ENCODE measurements at regions of chr9 and their contacts with region 1.

Region 1: DNA sequence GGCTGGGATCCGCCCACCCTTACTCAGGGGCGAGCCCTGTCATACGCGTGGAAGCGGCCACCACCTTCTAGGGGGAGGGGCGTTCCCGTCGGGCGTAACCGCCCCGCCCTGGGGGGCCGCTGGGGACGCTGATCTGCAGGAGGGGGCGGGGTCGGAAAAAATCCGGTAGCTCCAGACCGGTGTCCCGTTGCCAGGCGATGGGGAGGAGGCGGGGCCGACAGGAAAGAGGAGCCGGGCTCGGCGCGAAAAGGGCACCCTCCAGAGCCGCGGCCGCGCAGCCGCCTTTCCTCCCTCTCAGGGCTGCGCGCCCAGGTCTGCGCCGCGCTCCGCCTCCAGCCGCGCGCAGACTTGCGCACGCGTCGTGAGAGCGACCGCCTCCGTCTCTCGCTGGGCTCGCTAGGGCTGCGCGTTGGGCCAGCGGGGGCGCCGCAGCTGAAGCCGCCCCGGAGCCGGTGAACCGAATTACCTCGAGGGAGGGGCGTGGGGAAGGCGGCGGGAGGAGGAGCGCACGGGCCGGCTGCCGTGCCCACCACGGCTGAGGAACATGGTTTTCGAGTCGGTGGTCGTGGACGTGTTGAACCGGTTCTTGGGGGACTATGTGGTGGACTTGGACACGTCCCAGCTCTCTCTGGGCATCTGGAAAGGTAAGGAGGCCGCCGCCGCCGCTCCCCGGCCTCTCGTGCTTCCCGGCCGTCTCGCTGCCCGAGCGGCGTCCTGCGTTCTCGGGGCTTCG is at the start of gene VPS13A:
- DNase-seq: peak; percentile 94
- ATAC-seq: peak; percentile 84
- H3K4me3 ChIP-seq: peak within 1 kb of the TSS; percentile 60 to 88 (median 78)
- H3K4me3 Mint-ChIP-seq: peak within 1 kb of the TSS; percentile 94
- H3K27ac ChIP-seq: peak within 1 kb of the TSS; percentile 78 to 92
- H3K27ac Mint-ChIP-seq: peak within 1 kb of the TSS; percentile 96
- H3K4me1 ChIP-seq: peaks cover 6 to 18% of the 10 kb centered on the region in 2 donors
- H3K4me1 Mint-ChIP-seq: peaks cover 28% of the 10 kb centered on the region
- H3K27me3 ChIP-seq: no peaks in the 10 kb centered on the region
- H3K27me3 Mint-ChIP-seq: no peaks in the 10 kb centered on the region
- CTCF ChIP-seq: peak; percentile 27
- total RNA-seq, gene VPS13A: 57.8 and 67.9 TPM in 2 replicates

Region 2: GRCh38 chr9:76393963-76394679 is 783.2 kb before region 1 on chr9 and contains the start of gene RFK:
- CTCF ChIA-PET with region 1: no interaction called
- POLR2A ChIA-PET with region 1: no interaction called
- intact Hi-C with region 1: loop called (anchors 1 kb)
- DNase-seq: peak; percentile 95
- ATAC-seq: peak; percentile 92
- H3K4me3 ChIP-seq: peak within 1 kb of the TSS; percentile 93 to 98 (median 97)
- H3K4me3 Mint-ChIP-seq: peak within 1 kb of the TSS; percentile 94
- H3K27ac ChIP-seq: peak within 1 kb of the TSS; percentile 78 to 98
- H3K27ac Mint-ChIP-seq: peak within 1 kb of the TSS; percentile 98
- H3K4me1 ChIP-seq: peaks cover 9 to 15% of the 10 kb centered on the region in 2 donors
- H3K4me1 Mint-ChIP-seq: peaks cover 15% of the 10 kb centered on the region
- H3K27me3 ChIP-seq: no peaks in the 10 kb centered on the region
- H3K27me3 Mint-ChIP-seq: no peaks in the 10 kb centered on the region
- CTCF ChIP-seq: peak; percentile 61
- total RNA-seq, gene RFK: 7.3 and 9.0 TPM in 2 replicates

Region 3: GRCh38 chr9:76756268-76756640 is 421.1 kb before region 1 on chr9:
- CTCF ChIA-PET with region 1: no interaction called
- POLR2A ChIA-PET with region 1: no interaction called
- intact Hi-C with region 1: loop called (anchors 5 kb)
- DNase-seq: peak; percentile 37
- ATAC-seq: no peak
- H3K4me3 ChIP-seq: peak overlapping the region in 1 of 5 experiments; percentile 28
- H3K4me3 Mint-ChIP-seq: peak overlapping the region; percentile 84
- H3K27ac ChIP-seq: peak overlapping the region; percentile 62 to 68
- H3K27ac Mint-ChIP-seq: peak overlapping the region; percentile 78
- H3K4me1 ChIP-seq: peaks cover 43 to 55% of the 10 kb centered on the region in 2 donors
- H3K4me1 Mint-ChIP-seq: peaks cover 62% of the 10 kb centered on the region
- H3K27me3 ChIP-seq: no peaks in the 10 kb centered on the region
- H3K27me3 Mint-ChIP-seq: peaks cover 4% of the 10 kb centered on the region
- CTCF ChIP-seq: no peak

Region 4: DNA sequence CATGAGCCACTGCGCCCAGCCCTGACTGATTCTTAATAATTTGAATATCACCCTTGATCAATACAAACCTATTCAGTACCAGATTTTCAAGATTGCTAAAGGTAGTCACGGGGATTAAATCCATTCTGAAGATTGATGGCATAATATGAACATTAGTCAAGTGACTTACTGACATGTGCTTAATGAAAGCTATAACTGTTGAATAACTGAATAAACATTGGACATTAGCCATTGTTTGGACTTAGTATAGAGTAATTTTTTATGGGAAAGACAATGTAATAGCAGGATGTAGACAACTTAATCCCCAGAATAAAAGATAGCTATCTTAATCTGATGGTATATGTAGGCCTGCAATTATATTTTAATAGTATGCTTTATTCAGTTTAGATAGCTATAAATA is 35.0 kb before region 1 on chr9:
- CTCF ChIA-PET with region 1: no interaction called
- POLR2A ChIA-PET with region 1: no interaction called
- intact Hi-C with region 1: no loop called
- DNase-seq: no peak
- ATAC-seq: no peak
- H3K4me3 ChIP-seq: no peak overlapping the region
- H3K4me3 Mint-ChIP-seq: no peak overlapping the region
- H3K27ac ChIP-seq: no peak overlapping the region
- H3K27ac Mint-ChIP-seq: no peak overlapping the region
- H3K4me1 ChIP-seq: no peaks in the 10 kb centered on the region
- H3K4me1 Mint-ChIP-seq: no peaks in the 10 kb centered on the region
- H3K27me3 ChIP-seq: peaks cover 0 to 4% (median 0%) of the 10 kb centered on the region in 4 experiments
- H3K27me3 Mint-ChIP-seq: peaks cover 13% of the 10 kb centered on the region
- CTCF ChIP-seq: no peak

Region 5: DNA sequence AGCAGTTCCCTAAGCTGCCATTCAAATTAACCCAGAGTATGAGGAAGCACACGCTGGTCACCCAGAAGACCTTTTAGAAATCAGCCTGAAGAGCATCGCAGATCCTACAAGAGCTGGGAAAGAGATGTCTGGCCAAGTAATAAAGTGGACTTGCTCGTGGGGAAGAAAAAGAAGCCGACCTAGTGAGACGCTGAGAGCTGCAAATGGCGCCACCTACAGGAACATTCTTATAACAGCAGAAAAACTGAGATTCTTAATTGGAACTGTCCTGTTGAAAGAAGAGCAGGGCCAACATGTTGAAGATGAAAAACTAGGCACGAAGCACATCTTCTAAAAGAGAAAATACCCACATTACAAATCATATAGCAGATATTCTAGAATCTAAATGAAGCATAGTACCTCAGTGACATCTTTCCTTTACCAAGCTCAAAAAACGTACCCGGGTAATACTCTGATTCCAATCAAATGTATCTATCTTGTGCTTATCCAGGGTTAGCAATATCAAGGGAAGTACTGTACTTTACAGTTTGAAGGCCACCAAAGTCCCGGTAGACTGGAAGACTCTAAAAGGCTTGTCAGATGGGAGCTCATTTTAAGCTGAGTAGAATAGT is 858.2 kb after region 1 on chr9:
- CTCF ChIA-PET with region 1: no interaction called
- POLR2A ChIA-PET with region 1: no interaction called
- intact Hi-C with region 1: loop called (anchors 5 kb)
- DNase-seq: peak; percentile 68
- ATAC-seq: no peak
- H3K4me3 ChIP-seq: no peak overlapping the region
- H3K4me3 Mint-ChIP-seq: no peak overlapping the region
- H3K27ac ChIP-seq: no peak overlapping the region
- H3K27ac Mint-ChIP-seq: no peak overlapping the region
- H3K4me1 ChIP-seq: peaks cover 18 to 19% of the 10 kb centered on the region in 2 donors
- H3K4me1 Mint-ChIP-seq: peaks cover 13% of the 10 kb centered on the region
- H3K27me3 ChIP-seq: peaks cover 0 to 42% (median 34%) of the 10 kb centered on the region in 4 experiments
- H3K27me3 Mint-ChIP-seq: peaks cover 55% of the 10 kb centered on the region
- CTCF ChIP-seq: peak; percentile 71

Region 6: DNA sequence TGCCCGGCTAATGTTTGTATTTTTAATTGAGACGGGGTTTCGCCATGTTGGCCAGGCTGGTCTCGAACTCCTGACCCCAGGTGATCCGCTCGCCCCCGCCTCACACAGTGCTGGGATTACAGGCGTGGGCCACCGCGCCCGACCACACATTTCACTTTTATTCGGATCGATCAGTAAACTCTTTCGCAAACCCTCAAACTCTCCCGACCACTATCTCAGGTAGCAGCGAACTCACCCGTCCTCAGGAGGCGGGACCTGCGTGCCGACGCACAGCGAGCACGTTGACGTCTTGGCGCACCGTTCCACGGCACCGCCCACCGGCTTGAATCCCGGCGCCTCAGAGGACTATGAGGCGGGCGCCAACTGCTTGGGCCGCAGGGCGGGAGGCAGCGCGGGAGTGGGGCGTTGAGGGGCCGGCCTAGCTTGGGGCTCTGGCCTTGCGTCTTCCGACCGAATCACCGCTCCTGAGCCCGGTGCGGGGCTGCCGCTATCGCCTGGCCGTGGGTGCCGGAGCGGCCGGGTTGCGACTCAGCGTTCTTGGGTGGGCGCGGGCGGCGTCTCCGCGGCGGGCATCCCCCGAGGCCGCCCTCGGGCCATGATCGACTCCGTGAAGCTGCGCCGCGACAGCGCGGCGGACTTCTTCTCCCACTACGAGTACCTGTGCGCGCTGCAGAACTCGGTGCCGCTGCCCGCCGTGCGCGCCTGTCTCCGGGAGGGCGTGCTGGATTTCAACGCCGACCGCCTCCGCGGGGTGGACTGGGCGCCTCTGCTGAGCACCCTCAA is 1058.6 kb after region 1 on chr9 and contains the start of gene CEP78:
- CTCF ChIA-PET with region 1: no interaction called
- POLR2A ChIA-PET with region 1: no interaction called
- intact Hi-C with region 1: loop called (anchors 2 kb)
- DNase-seq: peak; percentile 91
- ATAC-seq: peak; percentile 99
- H3K4me3 ChIP-seq: peak within 1 kb of the TSS; percentile 50 to 90 (median 84)
- H3K4me3 Mint-ChIP-seq: no peak within 1 kb of the TSS
- H3K27ac ChIP-seq: peak within 1 kb of the TSS; percentile 58 to 84
- H3K27ac Mint-ChIP-seq: peak within 1 kb of the TSS; percentile 93
- H3K4me1 ChIP-seq: peaks cover 13 to 17% of the 10 kb centered on the region in 2 donors
- H3K4me1 Mint-ChIP-seq: peaks cover 26% of the 10 kb centered on the region
- H3K27me3 ChIP-seq: no peaks in the 10 kb centered on the region
- H3K27me3 Mint-ChIP-seq: no peaks in the 10 kb centered on the region
- CTCF ChIP-seq: no peak
- total RNA-seq, gene CEP78: 27.7 and 28.8 TPM in 2 replicates

Measured in B cell (primary cell).